ENCODE measurements at regions of chr16 and their contacts with region 1.

Region 1: DNA sequence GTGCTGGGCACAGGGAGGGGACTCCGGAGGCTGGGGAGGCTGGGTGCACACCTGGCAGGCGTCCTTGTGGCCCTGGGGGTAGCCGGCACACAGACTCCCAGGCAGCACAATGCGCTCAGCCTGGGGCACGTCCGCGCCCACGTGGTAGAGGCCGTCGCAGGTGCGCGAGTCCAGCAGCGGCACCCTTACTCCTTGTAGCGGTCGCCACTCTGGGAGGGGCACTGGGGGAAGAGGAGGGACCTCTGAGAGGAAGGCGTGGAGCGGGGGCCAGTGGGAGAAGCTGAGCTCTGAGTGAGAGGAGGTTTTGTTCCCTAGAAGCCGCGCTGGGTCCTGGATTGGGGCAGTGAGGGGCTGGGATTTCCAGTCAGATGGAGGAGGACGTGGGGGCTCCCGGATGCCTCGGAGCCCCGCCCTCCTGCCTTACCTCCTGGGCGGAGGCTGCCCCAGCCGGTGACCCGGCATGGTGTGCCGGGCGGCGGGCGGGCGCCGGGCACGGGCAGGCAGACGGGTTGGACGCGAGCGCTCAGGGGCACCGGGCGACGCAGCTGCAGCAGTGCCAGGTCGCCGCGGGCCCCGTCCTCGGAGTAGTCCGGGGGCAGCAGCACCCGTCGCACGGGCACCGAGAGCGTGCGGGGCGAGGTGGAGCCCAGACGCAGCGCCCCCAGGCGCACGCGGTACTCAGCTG is 2.3 kb downstream of the PRSS33 start:
- DNase-seq: no peak
- ATAC-seq: no peak
- H3K4me3 ChIP-seq: no peak overlapping the region
- H3K27ac ChIP-seq: no peak overlapping the region
- H3K4me1 ChIP-seq: no peaks in the 10 kb centered on the region
- CTCF ChIP-seq: no peak
- EP300 ChIP-seq: no peak
- POLR2A ChIP-seq: no peak
- RAD21 ChIP-seq: no peak

Region 2: DNA sequence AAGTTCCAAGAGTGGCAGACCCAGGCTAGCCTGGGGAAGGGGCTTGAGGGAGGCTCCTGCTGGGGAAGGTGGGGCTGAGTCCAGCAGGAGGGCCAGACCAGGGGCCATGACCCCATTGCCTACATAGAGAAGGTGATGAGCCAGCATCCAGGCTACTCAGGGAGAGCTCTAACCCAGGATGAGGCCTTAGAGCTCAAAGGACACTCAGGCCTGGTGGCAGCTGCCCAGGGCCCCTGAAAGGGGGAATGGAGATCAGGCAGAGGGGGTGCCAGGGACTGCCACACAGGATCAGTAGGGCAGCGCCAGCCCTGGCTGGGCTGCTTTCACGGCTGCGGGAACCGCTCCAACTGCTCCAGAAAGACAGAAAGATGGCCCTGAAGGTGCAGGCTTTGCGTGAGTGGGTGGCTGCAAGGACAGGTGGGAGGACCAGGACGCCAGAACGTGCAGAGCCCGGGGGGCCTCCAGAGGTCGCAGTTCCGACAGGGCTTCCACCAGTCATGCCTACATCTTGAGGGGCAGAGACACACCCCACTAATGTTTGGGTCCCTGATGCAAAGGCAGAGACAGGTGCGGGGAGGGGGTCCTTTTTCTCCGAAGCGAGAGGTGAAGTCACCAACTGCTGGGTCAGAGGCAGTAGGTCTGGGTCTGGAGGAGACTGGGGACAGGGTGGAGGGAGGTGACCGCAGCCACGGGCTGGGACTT is 272.2 kb before region 1 on chr16:
- CTCF ChIA-PET with region 1: no interaction called
- POLR2A ChIA-PET with region 1: no interaction called
- DNase-seq: no peak
- ATAC-seq: peak in 1 of 2 experiments; percentile 6; a peak in 2 of 6 replicates
- H3K4me3 ChIP-seq: peak overlapping the region; percentile 84
- H3K27ac ChIP-seq: peak overlapping the region; percentile 98 to 99
- H3K4me1 ChIP-seq: peaks cover 29% of the 10 kb centered on the region
- CTCF ChIP-seq: no peak
- EP300 ChIP-seq: no peak
- POLR2A ChIP-seq: no peak
- RAD21 ChIP-seq: no peak

Region 3: DNA sequence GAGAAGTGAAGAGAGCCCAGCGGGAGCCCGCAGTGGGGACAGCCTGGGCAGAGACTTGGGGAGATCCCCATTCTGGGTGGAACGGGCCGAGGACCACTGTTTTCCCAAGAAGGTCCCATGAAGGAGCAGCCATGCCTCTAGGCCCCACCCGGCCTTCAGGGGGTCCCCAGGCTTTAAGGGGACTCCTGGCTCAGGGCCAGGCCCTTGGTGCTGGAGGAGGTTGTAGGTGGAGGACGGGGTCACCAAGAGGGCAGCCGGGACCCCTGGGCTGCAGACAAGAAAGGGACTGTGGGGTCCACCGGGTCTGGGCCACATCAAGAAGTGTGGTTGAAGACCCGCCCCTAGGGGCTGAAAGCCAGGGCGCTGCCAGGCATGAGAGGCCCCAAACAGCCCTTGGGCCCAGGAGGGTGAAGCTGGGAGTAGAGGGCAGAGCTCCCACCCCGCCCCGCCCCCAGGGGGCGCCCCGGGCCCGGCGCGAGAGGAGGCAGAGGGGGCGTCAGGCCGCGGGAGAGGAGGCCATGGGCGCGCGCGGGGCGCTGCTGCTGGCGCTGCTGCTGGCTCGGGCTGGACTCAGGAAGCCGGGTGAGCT is 31.8 kb after region 1 on chr16 and contains the start of gene PRSS21:
- CTCF ChIA-PET with region 1: interaction called, 12 read pairs
- POLR2A ChIA-PET with region 1: no interaction called
- DNase-seq: no peak
- ATAC-seq: peak in 1 of 2 experiments; percentile 52; a peak in 3 of 6 replicates
- H3K4me3 ChIP-seq: no peak within 1 kb of the TSS
- H3K27ac ChIP-seq: no peak within 1 kb of the TSS
- H3K4me1 ChIP-seq: no peaks in the 10 kb centered on the region
- CTCF ChIP-seq: no peak
- EP300 ChIP-seq: no peak
- POLR2A ChIP-seq: no peak
- RAD21 ChIP-seq: no peak
- polyA plus RNA-seq, gene PRSS21: 0.16 and 0.23 TPM in 2 replicates

Measured in A549 (cell line).